ENCODE measurements at regions of chr13 and their contacts with region 1.

Region 1: GRCh38 chr13:26985285-26985878 is 186.2 kb downstream of the USP12 start:
- DNase-seq: peak; percentile 61
- ATAC-seq: peak; percentile 68 to 74

Region 2: DNA sequence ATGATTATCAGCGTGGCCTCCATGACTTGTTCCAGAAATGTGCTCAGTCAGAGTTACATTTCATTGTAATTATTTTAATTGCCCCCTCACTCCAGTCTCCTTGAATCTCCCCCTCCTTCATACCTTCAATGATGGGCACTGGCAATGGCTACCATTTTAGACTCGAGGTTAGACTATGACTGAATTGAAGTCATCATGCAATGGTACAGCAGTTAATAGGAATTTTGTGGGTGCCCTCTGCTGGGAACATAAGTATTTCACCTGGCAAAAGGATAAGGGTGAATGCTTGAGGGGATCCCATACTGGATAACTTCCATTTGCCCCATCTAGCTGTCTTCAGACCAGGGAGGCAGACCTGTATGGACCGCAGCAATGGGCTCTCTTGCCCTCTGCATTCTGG is 218.5 kb after region 1 on chr13:
- intact Hi-C with region 1: loop called in 1 of 2 experiments (anchors 10 kb)
- DNase-seq: no peak
- ATAC-seq: peak in 1 of 2 donors; percentile 56

Region 3: GRCh38 chr13:27283906-27284493 is 298.6 kb after region 1 on chr13:
- intact Hi-C with region 1: loop called in 1 of 2 experiments (anchors 10 kb)
- DNase-seq: peak; percentile 30
- ATAC-seq: peak; percentile 69 to 73

Region 4: GRCh38 chr13:27293873-27294515 is 308.6 kb after region 1 on chr13:
- intact Hi-C with region 1: loop called (anchors 10 kb)
- DNase-seq: no peak
- ATAC-seq: no peak

Region 5: DNA sequence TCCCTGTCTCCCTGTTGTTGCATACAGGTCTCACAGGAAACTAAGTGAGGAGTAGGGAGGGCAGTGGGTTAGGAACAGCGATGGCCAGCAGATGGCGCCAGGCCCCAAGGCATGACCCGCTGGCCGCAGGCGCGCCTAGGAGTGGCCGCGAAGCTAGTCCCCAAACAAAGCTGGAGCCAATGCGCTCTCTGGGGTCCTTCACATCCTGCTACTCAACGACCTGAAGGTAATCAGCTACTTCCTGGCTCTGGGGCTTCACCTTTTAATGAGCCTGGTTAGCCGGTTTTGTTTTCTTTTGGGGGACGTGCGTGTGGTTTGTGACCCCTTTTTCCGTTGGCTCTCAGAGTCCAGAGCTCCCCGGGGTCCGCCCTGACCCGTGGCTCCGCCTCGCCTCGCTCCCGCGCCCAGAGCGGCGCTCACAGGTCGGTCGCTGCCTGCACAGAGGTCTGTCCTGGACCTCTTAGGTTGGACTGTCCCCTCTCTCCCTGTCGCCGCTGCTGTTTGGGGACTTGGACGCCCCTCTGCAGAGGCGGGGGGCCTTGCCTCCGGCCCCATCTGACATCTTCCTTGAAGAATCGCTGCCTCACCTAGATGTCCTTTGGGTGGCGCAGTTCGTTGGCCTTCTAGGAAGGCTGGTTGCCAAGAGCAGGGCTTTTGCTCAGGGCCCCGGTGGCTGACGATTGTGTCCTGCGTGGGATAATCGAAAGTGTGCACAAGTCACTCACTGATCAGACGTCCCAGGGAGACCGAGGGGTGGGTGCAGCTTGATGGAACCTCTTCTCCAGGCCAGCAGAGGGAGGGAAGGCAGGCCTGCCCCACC is 376.9 kb after region 1 on chr13:
- intact Hi-C with region 1: loop called (anchors 1 to 2 kb)
- DNase-seq: peak; percentile 89
- ATAC-seq: peak; percentile 96 to 97